ENCODE measurements at regions of chr18 and their contacts with region 1.

Region 1: GRCh38 chr18:7272311-7273049 is 41.6 kb downstream of the LRRC30 start:
- DNase-seq: peak; percentile 60 to 65
- H3K4me3 ChIP-seq: no peak overlapping the region
- H3K27ac ChIP-seq: peak overlapping the region; percentile 32 to 77
- H3K4me1 ChIP-seq: peaks cover 0 to 7% of the 10 kb centered on the region in 2 donors
- H3K27me3 ChIP-seq: no peaks in the 10 kb centered on the region
- CTCF ChIP-seq: peak; percentile 47 to 61 (median 53)
- POLR2A ChIP-seq: no peak

Region 2: GRCh38 chr18:7000484-7001096 is 271.9 kb before region 1 on chr18:
- intact Hi-C with region 1: no loop called
- DNase-seq: no peak
- H3K4me3 ChIP-seq: no peak overlapping the region
- H3K27ac ChIP-seq: no peak overlapping the region
- H3K4me1 ChIP-seq: no peaks in the 10 kb centered on the region
- H3K27me3 ChIP-seq: no peaks in the 10 kb centered on the region
- CTCF ChIP-seq: peak in 3 of 4 experiments; percentile 28 to 35 (median 30)
- POLR2A ChIP-seq: no peak

Region 3: DNA sequence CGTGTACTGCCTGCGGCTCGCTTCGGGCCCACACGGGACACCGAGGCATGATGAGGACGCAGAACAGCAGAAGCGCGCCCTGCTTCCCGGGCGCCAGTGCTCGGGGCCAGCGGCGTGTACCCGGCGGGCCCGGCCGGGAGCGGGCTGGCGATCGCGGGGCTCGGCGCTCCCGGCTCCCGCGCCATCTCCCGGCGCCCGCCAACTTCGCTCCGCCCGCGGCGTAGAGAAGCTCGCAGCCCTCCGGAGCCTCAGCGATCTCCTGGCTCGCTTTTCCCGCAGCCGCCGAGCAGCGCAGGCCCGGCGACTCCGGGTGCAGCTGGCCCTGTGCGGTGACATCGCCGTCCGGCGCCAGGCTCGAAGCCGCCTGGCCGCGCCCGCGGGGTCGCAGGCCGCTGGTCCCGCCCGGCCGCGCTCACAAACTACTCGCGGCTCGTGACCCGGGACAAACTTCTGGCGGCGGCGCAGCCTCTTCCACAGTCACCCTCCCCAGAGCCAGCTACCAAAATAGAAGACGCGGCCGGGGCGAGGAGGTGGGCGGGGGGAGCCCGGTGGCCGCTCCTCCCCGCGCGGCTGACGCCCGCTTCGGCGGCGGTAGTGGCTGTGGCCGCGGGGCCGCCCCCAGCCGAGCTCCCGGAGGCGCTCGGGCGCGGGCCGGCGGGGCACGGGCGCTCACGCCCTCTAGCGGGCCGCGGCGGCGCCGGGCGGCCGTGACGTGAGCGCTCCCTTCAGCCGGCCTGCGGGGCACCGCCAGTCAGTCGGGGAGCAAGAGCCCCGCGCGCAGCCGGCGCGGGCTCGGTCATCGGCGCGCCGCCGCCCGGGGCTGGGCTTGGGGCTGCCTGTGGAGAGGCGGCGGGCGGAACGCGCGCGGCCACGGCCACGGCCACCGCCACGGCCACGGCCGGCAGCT is 294.3 kb after region 1 on chr18 and contains the start of gene PTPRM:
- intact Hi-C with region 1: loop called (anchors 5 kb)
- DNase-seq: peak; percentile 86 to 88
- H3K4me3 ChIP-seq: peak within 1 kb of the TSS; percentile 53 to 89
- H3K27ac ChIP-seq: peak within 1 kb of the TSS; percentile 93 to 99
- H3K4me1 ChIP-seq: peaks cover 0 to 5% of the 10 kb centered on the region in 2 donors
- H3K27me3 ChIP-seq: no peaks in the 10 kb centered on the region
- CTCF ChIP-seq: peak in 3 of 4 experiments; percentile 54 to 95 (median 90)
- POLR2A ChIP-seq: peak; percentile 89 to 93
- total RNA-seq, gene PTPRM: 62.0 to 127 (median 85.7) TPM